IMR-90 (cell line): ENCODE measurements at regions of chr3 and their contacts with region 1.

Region 1: DNA sequence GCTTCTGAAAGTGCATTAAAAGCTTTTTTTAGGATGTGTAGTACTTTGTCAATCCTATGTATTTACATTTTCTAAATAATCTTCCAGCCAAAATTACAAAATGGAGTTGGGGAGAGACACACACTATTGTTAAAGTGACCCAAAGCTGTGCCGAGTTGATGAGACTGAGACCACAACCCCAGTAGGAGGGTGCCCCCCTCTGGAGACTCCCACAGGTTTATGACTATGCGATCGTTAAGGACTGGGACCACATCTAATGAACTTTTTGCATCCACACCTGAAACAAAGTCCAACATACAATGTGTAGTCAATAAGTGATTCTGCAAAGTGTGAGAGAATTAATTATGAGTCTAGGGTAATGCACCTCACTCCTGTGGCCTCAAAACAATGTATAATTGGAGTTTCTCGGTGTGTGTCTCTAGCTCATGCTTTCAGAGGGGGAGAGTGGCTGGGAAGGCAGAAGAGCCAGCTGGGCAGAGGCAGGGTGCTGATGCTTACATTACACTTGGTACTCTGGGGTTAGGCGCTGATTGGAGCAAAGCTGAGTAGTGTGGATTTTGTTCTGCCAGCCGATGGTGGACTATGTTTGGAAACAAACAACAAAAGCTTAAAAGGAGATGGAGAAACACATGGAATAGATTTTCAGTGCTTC is 102.8 kb downstream of the KCNH8 start:
- DNase-seq: no peak
- ATAC-seq: no peak
- H3K4me3 ChIP-seq: no peak overlapping the region
- H3K27ac ChIP-seq: no peak overlapping the region
- H3K4me1 ChIP-seq: no peaks in the 10 kb centered on the region
- H3K27me3 ChIP-seq: no peaks in the 10 kb centered on the region
- CTCF ChIP-seq: no peak
- POLR2A ChIP-seq: no peak
- RAD21 ChIP-seq: no peak

Region 2: DNA sequence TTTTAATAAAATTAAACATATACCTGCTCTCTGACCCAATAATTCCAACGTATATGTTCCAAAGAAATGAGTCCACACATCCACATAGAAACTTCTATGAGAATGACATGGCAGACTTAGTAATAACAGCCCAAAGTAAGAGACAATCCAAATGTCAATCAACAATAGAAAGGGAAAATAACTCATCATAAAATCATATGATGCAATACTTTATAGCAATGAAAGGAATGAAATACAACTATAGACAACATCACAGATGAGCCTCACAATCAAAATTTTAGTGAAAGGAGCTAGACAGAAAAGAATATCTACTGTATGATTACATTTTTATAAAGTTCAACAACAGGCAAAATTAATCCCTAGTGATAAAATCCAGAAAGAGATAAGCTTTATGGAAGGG is 126.3 kb before region 1 on chr3:
- CTCF ChIA-PET with region 1: no interaction called
- POLR2A ChIA-PET with region 1: no interaction called
- dilution Hi-C with region 1: no loop called
- in situ Hi-C with region 1: no loop called
- intact Hi-C with region 1: no loop called
- DNase-seq: no peak
- ATAC-seq: no peak
- H3K4me3 ChIP-seq: no peak overlapping the region
- H3K27ac ChIP-seq: no peak overlapping the region
- H3K4me1 ChIP-seq: no peaks in the 10 kb centered on the region
- H3K27me3 ChIP-seq: no peaks in the 10 kb centered on the region
- CTCF ChIP-seq: no peak
- POLR2A ChIP-seq: no peak
- RAD21 ChIP-seq: no peak

Region 3: GRCh38 chr3:19173945-19174344 is 77.1 kb before region 1 on chr3:
- CTCF ChIA-PET with region 1: no interaction called
- POLR2A ChIA-PET with region 1: interaction called, 10 read pairs
- dilution Hi-C with region 1: no loop called
- in situ Hi-C with region 1: no loop called
- intact Hi-C with region 1: no loop called
- DNase-seq: no peak
- ATAC-seq: no peak
- H3K4me3 ChIP-seq: no peak overlapping the region
- H3K27ac ChIP-seq: no peak overlapping the region
- H3K4me1 ChIP-seq: no peaks in the 10 kb centered on the region
- H3K27me3 ChIP-seq: no peaks in the 10 kb centered on the region
- CTCF ChIP-seq: no peak
- POLR2A ChIP-seq: no peak
- RAD21 ChIP-seq: no peak